HCT116 (cell line): ENCODE measurements at regions of chr19 and their contacts with region 1.

Region 1: DNA sequence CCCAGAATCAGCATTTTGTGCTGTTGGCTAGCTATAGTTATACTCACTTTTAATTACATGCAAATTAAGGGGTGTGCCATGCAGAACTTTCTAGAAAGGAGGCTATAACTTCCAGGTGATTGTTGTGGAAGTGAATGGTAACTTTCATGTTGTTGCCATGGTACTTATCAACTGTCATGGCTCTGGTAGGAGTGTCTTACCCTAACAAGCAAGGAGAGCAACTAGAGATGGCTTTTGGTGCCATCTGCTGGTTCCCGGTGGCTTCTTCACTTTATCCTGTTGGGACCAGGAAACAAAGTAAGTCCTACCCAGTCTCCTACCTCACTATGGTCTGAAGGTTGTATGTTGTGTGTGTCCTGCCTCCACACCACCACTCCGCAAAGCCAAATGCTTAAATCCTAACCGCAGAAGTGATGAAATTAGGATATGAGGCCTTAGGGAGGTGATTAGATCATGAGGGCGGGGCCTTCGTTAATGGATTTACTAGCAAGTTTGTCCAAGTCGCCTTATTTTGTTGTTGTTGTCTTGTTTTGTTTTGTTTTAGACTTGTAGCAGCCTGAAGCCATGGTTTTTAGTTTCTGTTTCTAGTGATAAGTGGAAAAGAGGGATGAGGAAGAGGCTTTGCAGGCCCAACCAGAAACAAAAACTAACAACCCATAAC is 22.6 kb downstream of the FBXL12 start:
- DNase-seq: peak; percentile 90
- ATAC-seq: peak; percentile 100
- H3K4me3 ChIP-seq: no peak overlapping the region
- H3K27ac ChIP-seq: no peak overlapping the region
- H3K4me1 ChIP-seq: no peaks in the 10 kb centered on the region
- H3K27me3 ChIP-seq: no peaks in the 10 kb centered on the region
- CTCF ChIP-seq: peak; percentile 84 to 90 (median 89)
- POLR2A ChIP-seq: no peak
- RAD21 ChIP-seq: peak; percentile 97

Region 2: DNA sequence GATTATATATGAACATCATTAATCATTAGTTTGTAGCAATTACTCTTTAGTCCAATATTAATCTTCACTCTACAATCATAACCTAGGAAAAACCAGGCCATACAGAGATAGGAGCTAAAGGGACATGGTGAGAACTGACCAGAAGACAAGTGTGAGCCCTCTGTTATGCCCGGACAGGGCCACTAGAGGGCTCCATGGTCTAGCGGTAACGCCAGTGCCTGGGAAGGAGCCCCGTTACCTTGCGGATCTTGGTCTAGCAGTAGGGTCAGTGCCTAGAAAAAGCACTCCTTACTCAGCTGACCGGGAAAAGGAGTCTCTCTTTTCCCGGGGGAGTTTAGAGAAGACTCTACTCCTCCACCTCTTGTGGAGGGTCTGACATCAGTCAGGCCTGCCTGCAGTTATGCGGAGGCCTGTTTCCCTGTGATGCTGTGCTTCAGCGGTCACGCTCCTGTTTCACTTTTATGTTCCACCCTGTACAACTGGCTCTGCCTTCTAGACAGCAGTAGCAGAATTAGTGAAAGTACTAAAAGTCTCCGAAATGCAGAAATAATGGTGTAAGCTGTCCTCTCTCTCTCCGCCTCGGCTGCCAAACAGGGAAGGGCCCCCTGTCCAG is 590.6 kb before region 1 on chr19:
- CTCF ChIA-PET with region 1: interaction called, 5 read pairs
- POLR2A ChIA-PET with region 1: no interaction called
- RAD21 ChIA-PET with region 1: interaction called in 1 of 2 experiments, 3 read pairs
- intact Hi-C with region 1: loop called (anchors 1 kb)
- DNase-seq: peak; percentile 34
- ATAC-seq: peak; percentile 85
- H3K4me3 ChIP-seq: no peak overlapping the region
- H3K27ac ChIP-seq: no peak overlapping the region
- H3K4me1 ChIP-seq: no peaks in the 10 kb centered on the region
- H3K27me3 ChIP-seq: no peaks in the 10 kb centered on the region
- CTCF ChIP-seq: peak; percentile 47 to 83 (median 76); a peak in 5 of 6 replicates
- POLR2A ChIP-seq: no peak
- RAD21 ChIP-seq: peak; percentile 82

Region 3: GRCh38 chr19:9309139-9309973 is 486.9 kb before region 1 on chr19 and contains the start of gene ZNF699:
- CTCF ChIA-PET with region 1: no interaction called
- POLR2A ChIA-PET with region 1: no interaction called
- RAD21 ChIA-PET with region 1: no interaction called
- intact Hi-C with region 1: loop called (anchors 5 kb)
- DNase-seq: peak; percentile 96
- ATAC-seq: peak; percentile 88
- H3K4me3 ChIP-seq: peak within 1 kb of the TSS; percentile 91 to 95
- H3K27ac ChIP-seq: peak within 1 kb of the TSS; percentile 79
- H3K4me1 ChIP-seq: peaks cover 0 to 9% of the 10 kb centered on the region in 2 experiments; a peak in 2 of 4 replicates
- H3K27me3 ChIP-seq: no peaks in the 10 kb centered on the region
- CTCF ChIP-seq: no peak
- POLR2A ChIP-seq: no peak
- RAD21 ChIP-seq: no peak
- total RNA-seq, gene ZNF699: 7.8 TPM

Region 4: DNA sequence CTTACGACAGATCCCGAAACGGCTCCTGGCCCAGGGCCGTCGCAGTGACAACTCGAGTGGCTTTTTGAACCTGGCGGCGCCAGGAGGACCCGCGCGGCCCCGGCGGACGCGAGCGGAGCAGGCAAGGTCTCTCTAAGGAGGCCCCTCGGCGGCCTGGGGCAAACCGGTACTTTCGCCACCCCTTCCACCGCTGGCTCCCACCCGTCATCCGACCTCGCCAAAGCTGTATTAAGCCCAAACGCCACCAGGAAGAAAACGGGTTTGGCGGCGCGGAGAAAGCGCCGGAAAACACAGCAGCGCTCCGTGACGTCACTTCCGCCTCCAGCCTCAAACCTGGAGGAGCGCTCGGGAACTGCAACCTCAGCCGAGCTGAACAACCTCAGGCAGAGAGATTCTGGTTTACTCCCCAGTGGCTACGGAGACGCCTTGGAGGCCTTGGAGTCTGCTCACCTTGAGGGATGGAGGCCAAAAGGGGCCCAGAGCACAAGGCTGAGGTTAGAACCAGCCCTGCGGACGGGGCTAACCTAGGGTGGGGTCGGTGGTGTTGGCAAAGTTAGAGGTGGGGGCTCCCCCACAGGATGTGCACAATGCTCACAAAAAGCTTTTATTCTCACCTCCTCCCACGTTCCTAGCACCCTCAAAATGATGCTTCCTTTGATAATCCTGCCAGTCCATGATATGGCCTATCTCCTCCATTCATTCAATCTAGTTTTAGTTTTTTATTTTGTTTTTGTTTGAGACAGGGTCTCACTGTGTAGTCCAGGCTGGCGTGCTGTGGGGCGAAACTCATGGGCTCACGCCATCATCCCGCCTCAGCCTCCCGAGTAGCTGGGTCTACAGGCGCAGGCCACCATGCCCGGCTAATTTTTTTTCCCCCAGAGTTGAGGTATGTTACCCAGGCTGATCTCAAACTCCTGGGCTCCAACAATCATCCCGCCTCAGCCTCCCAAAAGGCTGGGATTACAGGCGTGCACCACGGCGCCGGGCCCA is 360.7 kb before region 1 on chr19 and contains the start of gene ZNF266:
- CTCF ChIA-PET with region 1: no interaction called
- POLR2A ChIA-PET with region 1: no interaction called
- RAD21 ChIA-PET with region 1: no interaction called
- intact Hi-C with region 1: loop called (anchors 10 kb)
- DNase-seq: peak; percentile 87
- ATAC-seq: peak; percentile 91
- H3K4me3 ChIP-seq: peak within 1 kb of the TSS; percentile 75 to 77
- H3K27ac ChIP-seq: peak within 1 kb of the TSS; percentile 69
- H3K4me1 ChIP-seq: peaks cover 0 to 7% of the 10 kb centered on the region in 2 experiments; a peak in 2 of 4 replicates
- H3K27me3 ChIP-seq: no peaks in the 10 kb centered on the region
- CTCF ChIP-seq: peak in 2 of 3 experiments; percentile 59 to 70; a peak in 4 of 6 replicates
- POLR2A ChIP-seq: no peak
- RAD21 ChIP-seq: no peak
- total RNA-seq, gene ZNF266: 9.4 TPM

Region 5: GRCh38 chr19:9621156-9622037 is 174.8 kb before region 1 on chr19 and contains the start of gene ZNF561:
- CTCF ChIA-PET with region 1: interaction called, 15 read pairs
- POLR2A ChIA-PET with region 1: no interaction called
- RAD21 ChIA-PET with region 1: interaction called in 1 of 2 experiments, 3 read pairs
- intact Hi-C with region 1: loop called (anchors 1 kb)
- DNase-seq: peak; percentile 81
- ATAC-seq: peak; percentile 86
- H3K4me3 ChIP-seq: peak within 1 kb of the TSS; percentile 92 to 97
- H3K27ac ChIP-seq: peak within 1 kb of the TSS; percentile 81
- H3K4me1 ChIP-seq: peaks cover 3 to 13% of the 10 kb centered on the region in 2 experiments; a peak in 3 of 4 replicates
- H3K27me3 ChIP-seq: no peaks in the 10 kb centered on the region
- CTCF ChIP-seq: no peak
- POLR2A ChIP-seq: peak; percentile 65
- RAD21 ChIP-seq: no peak; the same call in 1 of the 2 replicates
- total RNA-seq, gene ZNF561: 31.3 TPM

Region 6: DNA sequence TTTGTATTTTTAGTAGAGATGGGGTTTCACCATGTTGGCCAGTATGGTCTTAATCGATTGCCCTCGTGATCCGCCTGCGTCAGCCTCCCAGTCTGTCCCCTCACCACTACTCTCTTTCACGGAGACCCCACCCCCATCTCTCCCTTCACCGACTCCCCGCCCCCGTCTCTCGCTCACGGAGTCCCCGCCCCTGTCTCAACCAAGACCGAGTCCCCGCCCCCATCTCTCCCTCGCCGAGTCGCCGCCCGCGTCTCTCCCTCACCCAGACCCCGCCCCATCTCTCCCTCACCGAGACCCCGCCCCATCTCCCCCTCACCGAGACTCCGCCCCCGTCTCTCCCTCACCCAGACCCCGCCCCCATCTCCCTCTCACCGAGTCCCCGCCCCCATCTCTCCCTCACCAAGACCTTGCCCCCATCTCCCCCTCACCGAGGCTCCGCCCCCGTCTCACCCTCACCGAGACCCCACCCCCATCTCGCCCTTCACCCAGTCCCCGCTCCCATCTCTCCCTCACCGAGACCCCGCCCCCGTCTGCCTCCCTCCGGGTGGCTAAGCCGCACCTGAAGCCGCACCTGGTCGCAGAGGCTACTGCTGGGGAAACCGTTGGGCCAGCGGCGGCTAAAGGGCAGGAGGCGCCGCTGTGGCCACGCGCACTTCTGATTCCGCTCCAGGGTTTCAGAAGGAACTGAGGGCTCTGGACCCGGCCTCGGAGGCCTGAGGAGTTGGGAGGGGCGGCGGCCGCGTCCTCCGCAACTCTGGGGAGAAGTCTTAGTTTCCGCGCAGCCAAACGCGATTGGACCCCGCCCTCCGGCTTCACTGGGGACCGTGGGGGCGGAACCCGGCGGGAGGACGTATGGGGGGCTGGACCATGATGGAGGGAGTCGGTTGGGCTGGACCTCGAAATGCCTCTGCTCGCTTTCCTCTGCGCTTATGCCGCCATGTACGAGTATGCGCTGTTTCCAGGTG is 10.6 kb before region 1 on chr19:
- CTCF ChIA-PET with region 1: no interaction called
- POLR2A ChIA-PET with region 1: no interaction called
- RAD21 ChIA-PET with region 1: no interaction called
- intact Hi-C with region 1: no loop called
- DNase-seq: peak; percentile 57
- ATAC-seq: peak; percentile 88
- H3K4me3 ChIP-seq: peak overlapping the region; percentile 45 to 58
- H3K27ac ChIP-seq: peak overlapping the region; percentile 48
- H3K4me1 ChIP-seq: peaks cover 2 to 7% of the 10 kb centered on the region in 2 experiments; a peak in 2 of 4 replicates
- H3K27me3 ChIP-seq: no peaks in the 10 kb centered on the region
- CTCF ChIP-seq: no peak
- POLR2A ChIP-seq: no peak
- RAD21 ChIP-seq: no peak

Region 7: GRCh38 chr19:9877775-9878510 is 81.7 kb after region 1 on chr19:
- CTCF ChIA-PET with region 1: no interaction called
- POLR2A ChIA-PET with region 1: no interaction called
- RAD21 ChIA-PET with region 1: no interaction called
- intact Hi-C with region 1: no loop called
- DNase-seq: peak; percentile 58
- ATAC-seq: peak; percentile 84
- H3K4me3 ChIP-seq: peak overlapping the region in 1 of 2 experiments; percentile 19; a peak in 1 of 4 replicates
- H3K27ac ChIP-seq: peak overlapping the region; percentile 48; the same call in 1 of the 2 replicates
- H3K4me1 ChIP-seq: peaks cover 19 to 33% of the 10 kb centered on the region in 2 experiments
- H3K27me3 ChIP-seq: no peaks in the 10 kb centered on the region
- CTCF ChIP-seq: no peak
- POLR2A ChIP-seq: no peak
- RAD21 ChIP-seq: no peak

Region 8: DNA sequence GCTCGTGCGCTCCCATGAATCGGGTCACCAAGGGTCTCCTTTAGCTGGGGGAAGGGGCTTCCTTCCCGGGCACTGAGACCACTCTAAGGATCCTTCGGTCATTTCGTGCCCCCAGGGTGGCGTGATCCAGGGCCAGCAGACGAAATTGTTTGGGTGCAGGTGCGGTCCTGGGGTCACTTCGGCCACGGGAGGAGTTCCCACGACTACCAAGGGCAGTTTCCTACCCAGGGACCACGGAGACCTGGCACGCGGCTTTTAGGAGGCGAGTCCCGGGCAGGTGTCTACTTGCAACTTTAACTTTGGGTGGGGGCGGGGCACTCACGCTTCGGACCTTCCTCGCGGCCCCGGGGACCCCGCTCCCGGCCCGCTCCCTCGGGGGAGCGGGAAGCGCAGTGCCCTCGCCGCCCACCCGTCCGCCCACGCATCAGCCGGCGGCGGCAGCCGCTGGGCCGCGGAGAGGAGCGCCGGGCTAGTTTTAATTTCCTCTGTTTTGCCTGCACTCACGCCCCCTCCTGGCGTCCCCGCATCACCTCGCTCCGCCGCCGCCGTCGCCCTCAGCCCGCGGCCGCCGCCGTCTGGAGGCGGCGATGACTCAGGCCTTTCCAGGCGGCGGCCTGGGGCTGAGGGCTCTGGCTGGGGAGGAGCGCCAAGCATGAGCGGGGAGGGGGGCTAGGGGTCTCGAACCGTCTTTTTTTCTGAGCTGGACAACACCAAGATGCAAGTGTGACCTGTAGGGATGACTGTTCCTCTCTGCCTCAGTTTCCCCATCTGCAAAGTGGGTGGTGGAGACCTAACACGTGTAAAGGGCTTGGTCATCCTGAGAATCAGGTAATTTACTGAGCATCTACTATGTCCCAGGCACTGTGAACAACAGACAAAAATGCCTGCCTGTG is 118.3 kb after region 1 on chr19:
- CTCF ChIA-PET with region 1: no interaction called
- POLR2A ChIA-PET with region 1: no interaction called
- RAD21 ChIA-PET with region 1: no interaction called
- intact Hi-C with region 1: no loop called
- DNase-seq: peak; percentile 53
- ATAC-seq: peak; percentile 87
- H3K4me3 ChIP-seq: peak overlapping the region; percentile 50 to 58
- H3K27ac ChIP-seq: peak overlapping the region; percentile 69
- H3K4me1 ChIP-seq: peaks cover 8 to 20% of the 10 kb centered on the region in 2 experiments; a peak in 3 of 4 replicates
- H3K27me3 ChIP-seq: no peaks in the 10 kb centered on the region
- CTCF ChIP-seq: peak; percentile 57 to 86 (median 63)
- POLR2A ChIP-seq: no peak
- RAD21 ChIP-seq: peak; percentile 67